MCF 10A (cell line): ENCODE measurements at regions of chr11 and their contacts with region 1.

Region 1: DNA sequence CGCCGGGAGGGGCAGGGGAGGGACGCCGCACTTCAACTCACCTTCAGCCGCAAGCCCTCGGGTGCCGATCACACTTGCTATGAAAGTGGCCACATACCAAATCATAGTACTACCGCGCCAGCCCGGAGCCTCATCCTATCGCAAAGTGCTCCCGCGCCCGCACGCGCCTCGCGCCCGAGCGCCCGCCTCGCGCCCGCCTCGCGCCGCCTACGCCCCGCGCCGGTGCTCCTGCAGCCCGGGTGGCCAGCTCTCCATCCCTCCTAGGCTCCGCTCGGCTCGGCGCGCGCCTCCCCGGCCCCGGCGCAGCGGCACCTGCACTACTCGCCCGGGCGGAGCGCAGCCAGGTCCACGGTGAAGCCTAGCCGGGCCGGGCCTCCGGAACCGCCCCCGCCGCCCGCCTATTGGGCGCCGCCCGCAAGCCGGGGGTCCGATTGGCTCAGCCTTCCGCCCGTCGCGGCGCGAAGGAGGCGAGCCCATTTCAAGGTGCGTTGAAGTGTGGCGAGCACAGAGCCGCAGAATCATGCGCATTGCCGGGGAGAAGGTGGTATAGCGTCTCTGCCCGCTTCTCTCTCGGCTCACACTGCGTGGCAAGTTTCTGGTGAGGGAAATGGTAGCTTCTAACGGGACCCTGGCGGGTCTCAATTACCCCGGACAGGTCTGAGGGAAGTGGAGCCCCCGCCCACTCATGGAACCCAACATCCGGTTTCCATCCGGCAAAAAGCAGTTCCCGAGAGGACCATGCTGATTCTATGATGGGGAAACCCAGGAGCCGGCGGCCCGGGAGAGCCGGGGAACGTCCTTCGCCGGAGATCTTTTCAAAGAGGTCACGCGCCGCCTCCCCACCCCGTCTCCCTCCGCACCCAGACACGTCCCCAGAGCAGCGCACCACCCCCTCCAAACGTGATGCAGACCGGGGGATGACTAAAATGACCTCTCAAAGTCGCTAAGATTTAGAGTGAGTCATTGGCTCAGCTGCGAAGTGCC is at the start of gene IGSF9B:
- DNase-seq: peak; percentile 89
- H3K4me3 Mint-ChIP-seq: peak within 1 kb of the TSS; percentile 79
- H3K27ac Mint-ChIP-seq: no peak within 1 kb of the TSS
- H3K4me1 Mint-ChIP-seq: peaks cover 30% of the 10 kb centered on the region
- H3K27me3 Mint-ChIP-seq: no peaks in the 10 kb centered on the region
- CTCF ChIP-seq: no peak
- total RNA-seq, gene IGSF9B: 13.9 and 19.7 TPM in 2 replicates

Region 2: GRCh38 chr11:134024420-134025081 is 67.6 kb after region 1 on chr11:
- CTCF ChIA-PET with region 1: interaction called, 4 read pairs
- POLR2A ChIA-PET with region 1: interaction called, 21 read pairs
- intact Hi-C with region 1: loop called (anchors 2 kb)
- DNase-seq: peak; percentile 89
- H3K4me3 Mint-ChIP-seq: peak overlapping the region; percentile 50
- H3K27ac Mint-ChIP-seq: peak overlapping the region; percentile 81
- H3K4me1 Mint-ChIP-seq: peaks cover 33% of the 10 kb centered on the region
- H3K27me3 Mint-ChIP-seq: no peaks in the 10 kb centered on the region
- CTCF ChIP-seq: no peak

Region 3: GRCh38 chr11:134033696-134034491 is 77.0 kb after region 1 on chr11:
- CTCF ChIA-PET with region 1: interaction called, 92 read pairs
- POLR2A ChIA-PET with region 1: interaction called, 21 read pairs
- intact Hi-C with region 1: no loop called
- DNase-seq: peak; percentile 86
- H3K4me3 Mint-ChIP-seq: peak overlapping the region; percentile 58
- H3K27ac Mint-ChIP-seq: peak overlapping the region; percentile 76
- H3K4me1 Mint-ChIP-seq: peaks cover 36% of the 10 kb centered on the region
- H3K27me3 Mint-ChIP-seq: no peaks in the 10 kb centered on the region
- CTCF ChIP-seq: no peak